Activated CD4-positive, alpha-beta T cell treated with anti-CD3 and anti-CD28 coated beads, Interleukin-2, amount 10 ng/mL, durations not matched to agents 24 days and 14 days (primary cell): ENCODE measurements at regions of chr12 and their contacts with region 1.

Region 1: GRCh38 chr12:55817346-55818139 is at the starts of genes ORMDL2 and SARNP:
- DNase-seq: peak; percentile 99
- H3K4me3 Mint-ChIP-seq: no peak within 1 kb of the TSS
- H3K27ac Mint-ChIP-seq: peak within 1 kb of the TSS; percentile 39
- H3K4me1 Mint-ChIP-seq: peaks cover 23% of the 10 kb centered on the region
- H3K27me3 Mint-ChIP-seq: no peaks in the 10 kb centered on the region
- total RNA-seq, gene ORMDL2: 49.8 and 55.8 TPM in 2 replicates
- total RNA-seq, gene SARNP: 76.6 and 81.6 TPM in 2 replicates

Region 2: GRCh38 chr12:55829967-55830600 is 12.5 kb after region 1 on chr12:
- intact Hi-C with region 1: loop called (anchors 1 kb)
- DNase-seq: peak; percentile 81
- H3K4me3 Mint-ChIP-seq: peak overlapping the region; percentile 98
- H3K27ac Mint-ChIP-seq: peak overlapping the region; percentile 93
- H3K4me1 Mint-ChIP-seq: peaks cover 47% of the 10 kb centered on the region
- H3K27me3 Mint-ChIP-seq: no peaks in the 10 kb centered on the region

Region 3: GRCh38 chr12:55940065-55940732 is 122.7 kb after region 1 on chr12:
- intact Hi-C with region 1: loop called (anchors 1 kb)
- DNase-seq: peak; percentile 95
- H3K4me3 Mint-ChIP-seq: peak overlapping the region; percentile 60
- H3K27ac Mint-ChIP-seq: peak overlapping the region; percentile 76
- H3K4me1 Mint-ChIP-seq: peaks cover 67% of the 10 kb centered on the region
- H3K27me3 Mint-ChIP-seq: no peaks in the 10 kb centered on the region

Region 4: DNA sequence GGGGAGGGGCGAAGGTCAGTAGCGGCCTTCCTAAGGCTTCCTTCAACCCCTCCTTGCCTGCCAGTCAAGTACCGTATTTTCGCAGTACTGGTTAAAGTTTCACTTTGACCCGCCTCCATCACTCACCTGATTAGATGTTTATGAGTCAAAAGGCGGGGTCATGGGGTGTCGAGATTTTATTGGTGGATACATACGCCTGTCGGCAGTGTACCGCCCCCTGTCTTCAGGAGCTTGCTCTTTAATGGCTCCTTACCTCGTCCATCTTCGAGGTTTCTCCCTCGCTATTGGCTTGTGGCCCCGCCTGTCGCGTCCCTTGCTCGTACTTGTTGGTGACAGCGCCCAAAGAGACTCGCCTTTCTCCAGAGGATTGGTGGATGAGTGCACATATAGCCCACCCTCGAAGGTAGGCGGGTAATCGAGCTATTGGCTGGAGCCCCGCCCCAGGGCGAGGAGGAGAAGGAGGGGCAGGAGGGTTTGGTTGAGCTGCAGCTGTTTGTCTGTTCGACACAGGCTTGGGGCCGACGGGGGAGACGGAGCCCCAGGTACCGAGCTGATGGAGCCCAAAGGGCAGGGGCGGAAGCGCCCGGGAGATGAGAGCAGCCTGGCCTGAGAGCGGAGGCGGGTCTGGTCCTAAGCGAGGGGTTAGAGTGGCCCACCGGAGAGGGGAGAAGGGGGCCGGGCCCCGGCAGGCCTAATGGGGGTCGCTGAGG is 156.2 kb after region 1 on chr12 and contains the start of gene RAB5B:
- intact Hi-C with region 1: loop called (anchors 1 kb)
- DNase-seq: peak; percentile 99
- H3K4me3 Mint-ChIP-seq: no peak within 1 kb of the TSS
- H3K27ac Mint-ChIP-seq: no peak within 1 kb of the TSS
- H3K4me1 Mint-ChIP-seq: peaks cover 28% of the 10 kb centered on the region
- H3K27me3 Mint-ChIP-seq: no peaks in the 10 kb centered on the region
- total RNA-seq, gene RAB5B: 39.0 and 40.2 TPM in 2 replicates